Cardiac septum (tissue), 1 donor: ENCODE measurements at regions of chr3 and their contacts with region 1.

Region 1: DNA sequence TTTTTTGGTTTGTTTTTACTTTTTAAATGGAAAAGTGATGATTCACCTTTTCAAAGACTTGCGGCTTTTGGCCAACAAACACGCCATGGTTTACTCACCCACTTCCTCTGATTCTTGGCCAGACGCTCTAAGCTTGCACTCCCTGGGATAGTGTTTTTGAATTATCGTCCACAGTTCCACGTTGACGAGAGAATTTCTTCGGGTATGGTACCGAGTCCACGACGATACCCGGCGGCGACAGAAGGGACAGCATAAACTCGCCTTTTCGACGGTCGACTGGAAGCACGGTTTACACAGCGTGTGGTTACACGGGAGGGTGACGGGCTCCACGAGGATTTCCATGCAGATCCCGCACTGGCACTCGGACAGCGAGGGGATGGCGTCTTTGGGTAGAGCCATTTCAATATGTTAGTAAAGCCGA is 783 bp downstream of the RNF168 start:
- DNase-seq: peak; percentile 80

Region 2: GRCh38 chr3:196287440-196288148 is 215.2 kb before region 1 on chr3 and contains the start of gene PCYT1A:
- intact Hi-C with region 1: loop called (anchors 1 kb)
- DNase-seq: peak; percentile 97
- total RNA-seq, gene PCYT1A: 116 TPM

Region 3: DNA sequence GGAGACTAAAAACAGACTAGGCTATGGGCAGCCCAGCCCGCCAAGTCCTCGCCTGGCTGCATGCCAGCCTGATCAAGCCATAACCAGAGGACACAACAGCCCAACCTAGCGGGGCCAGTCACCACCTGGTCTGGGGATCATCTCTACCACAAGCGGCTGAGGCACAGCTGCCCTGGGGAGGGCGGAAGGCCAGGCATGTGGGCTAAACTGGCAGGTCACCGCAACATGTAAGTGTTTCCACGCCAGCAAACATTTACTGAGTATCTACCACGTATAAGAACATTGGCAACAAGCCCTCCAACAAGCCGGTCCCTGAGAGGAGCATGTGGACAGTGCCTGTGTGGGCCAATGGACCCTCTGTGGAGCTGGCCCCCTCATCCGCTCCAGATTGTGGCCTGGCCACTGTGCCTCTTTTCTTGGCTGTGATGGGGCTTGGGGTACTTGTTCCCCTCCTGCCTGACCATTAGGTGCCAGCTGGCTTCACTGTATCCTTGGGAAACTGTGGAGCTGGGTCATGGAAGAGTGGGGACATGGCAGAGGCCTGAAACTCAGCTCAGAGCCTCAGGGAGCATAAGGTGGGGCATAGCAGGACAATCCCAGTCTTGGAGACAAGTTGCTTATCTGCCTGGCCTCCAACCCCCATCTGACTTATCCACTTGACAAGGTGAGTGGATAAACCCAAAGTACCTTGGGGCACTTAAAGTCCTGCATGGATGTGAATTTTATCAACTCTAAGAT is 79.6 kb before region 1 on chr3:
- intact Hi-C with region 1: no loop called
- DNase-seq: peak; percentile 87

Region 4: GRCh38 chr3:196735751-196736150 is 233.0 kb after region 1 on chr3:
- intact Hi-C with region 1: no loop called
- DNase-seq: no peak